Calu3 (cell line): ENCODE measurements at regions of chr12 and their contacts with region 1.

Region 1: GRCh38 chr12:76006028-76006925 is 25.3 kb downstream of the PHLDA1 start:
- DNase-seq: no peak
- H3K4me3 Mint-ChIP-seq: no peak overlapping the region
- H3K27ac Mint-ChIP-seq: no peak overlapping the region
- H3K4me1 Mint-ChIP-seq: peaks cover 24% of the 10 kb centered on the region
- H3K27me3 Mint-ChIP-seq: no peaks in the 10 kb centered on the region
- CTCF ChIP-seq: no peak

Region 2: DNA sequence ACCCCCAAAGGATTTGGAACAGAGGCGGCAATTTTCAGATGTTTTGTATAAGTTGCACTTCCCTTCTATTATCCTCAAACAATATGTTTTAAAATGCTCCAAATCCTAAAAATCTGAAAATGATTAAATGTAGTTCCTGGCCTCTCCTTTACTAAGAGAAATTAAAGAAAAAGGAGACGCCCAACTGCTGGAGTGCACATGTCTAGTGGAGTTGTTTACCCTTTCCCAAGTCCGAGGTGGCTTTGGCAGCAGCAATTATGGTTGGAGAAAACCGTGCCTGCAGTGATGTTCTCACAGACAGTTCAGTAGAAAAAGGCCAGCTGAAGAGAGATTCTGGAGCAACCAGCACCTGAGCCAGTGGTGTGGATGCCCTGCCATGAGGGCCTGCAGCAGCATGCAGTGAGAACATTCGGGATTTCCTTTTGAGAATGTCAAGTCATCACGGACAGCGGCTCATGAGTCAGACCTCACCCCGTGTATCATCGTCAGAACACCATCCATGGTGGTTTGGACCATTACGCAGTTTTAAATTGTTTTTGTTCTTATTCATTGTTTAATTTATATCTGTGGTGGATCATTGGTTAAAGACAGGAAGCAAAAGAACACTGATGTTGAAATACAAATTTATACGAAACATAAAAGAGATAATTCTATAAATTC is 315.9 kb before region 1 on chr12:
- CTCF ChIA-PET with region 1: interaction called, 11 read pairs
- intact Hi-C with region 1: no loop called
- DNase-seq: no peak
- H3K4me3 Mint-ChIP-seq: no peak overlapping the region
- H3K27ac Mint-ChIP-seq: no peak overlapping the region
- H3K4me1 Mint-ChIP-seq: peaks cover 7% of the 10 kb centered on the region
- H3K27me3 Mint-ChIP-seq: no peaks in the 10 kb centered on the region
- CTCF ChIP-seq: no peak